Gastrocnemius medialis (tissue), 4 donors: ENCODE measurements at regions of chr1 and their contacts with region 1.

Region 1: DNA sequence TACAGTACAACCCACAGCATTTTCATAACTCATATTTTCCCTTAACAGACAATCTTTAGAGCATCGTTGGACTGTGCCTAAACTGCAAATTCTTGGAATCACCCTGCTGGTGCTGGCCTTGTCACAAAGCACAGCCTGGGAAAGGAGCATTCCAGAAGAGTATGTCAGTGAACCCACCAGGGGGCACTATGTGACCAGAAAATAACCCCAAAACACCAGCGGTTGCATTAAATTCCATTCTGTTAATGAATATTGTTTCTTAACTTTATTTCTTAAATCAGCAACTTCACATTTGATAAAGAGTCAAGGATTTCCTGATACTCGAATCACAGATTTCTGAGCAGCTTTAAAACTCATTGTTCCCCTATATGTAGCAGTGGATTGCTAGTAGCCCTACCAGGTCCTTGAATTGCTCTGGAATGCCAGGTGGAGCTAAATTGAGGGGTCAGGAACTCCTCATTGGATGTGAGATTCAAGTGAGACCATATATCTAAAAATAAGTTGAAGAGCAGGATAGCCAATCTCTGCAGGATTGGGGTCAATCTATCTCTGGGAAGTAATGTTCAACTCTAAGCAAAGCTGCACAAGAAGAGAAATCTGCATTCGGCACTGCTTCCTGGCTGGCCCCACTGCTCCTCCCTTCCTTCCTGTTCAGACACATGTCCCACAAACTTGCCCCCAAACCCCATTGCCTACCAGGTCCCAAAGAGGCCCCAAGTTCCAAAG is 12.7 kb upstream of the RAB4A start:
- DNase-seq: peak; percentile 29 to 33
- ATAC-seq: peak; percentile 82 to 84
- H3K4me3 ChIP-seq: no peak overlapping the region
- H3K27ac ChIP-seq: no peak overlapping the region
- H3K4me1 ChIP-seq: peaks cover 5 to 8% of the 10 kb centered on the region in 2 donors
- H3K27me3 ChIP-seq: no peaks in the 10 kb centered on the region
- CTCF ChIP-seq: peak; percentile 79 to 84 (median 83)
- POLR2A ChIP-seq: no peak

Region 2: DNA sequence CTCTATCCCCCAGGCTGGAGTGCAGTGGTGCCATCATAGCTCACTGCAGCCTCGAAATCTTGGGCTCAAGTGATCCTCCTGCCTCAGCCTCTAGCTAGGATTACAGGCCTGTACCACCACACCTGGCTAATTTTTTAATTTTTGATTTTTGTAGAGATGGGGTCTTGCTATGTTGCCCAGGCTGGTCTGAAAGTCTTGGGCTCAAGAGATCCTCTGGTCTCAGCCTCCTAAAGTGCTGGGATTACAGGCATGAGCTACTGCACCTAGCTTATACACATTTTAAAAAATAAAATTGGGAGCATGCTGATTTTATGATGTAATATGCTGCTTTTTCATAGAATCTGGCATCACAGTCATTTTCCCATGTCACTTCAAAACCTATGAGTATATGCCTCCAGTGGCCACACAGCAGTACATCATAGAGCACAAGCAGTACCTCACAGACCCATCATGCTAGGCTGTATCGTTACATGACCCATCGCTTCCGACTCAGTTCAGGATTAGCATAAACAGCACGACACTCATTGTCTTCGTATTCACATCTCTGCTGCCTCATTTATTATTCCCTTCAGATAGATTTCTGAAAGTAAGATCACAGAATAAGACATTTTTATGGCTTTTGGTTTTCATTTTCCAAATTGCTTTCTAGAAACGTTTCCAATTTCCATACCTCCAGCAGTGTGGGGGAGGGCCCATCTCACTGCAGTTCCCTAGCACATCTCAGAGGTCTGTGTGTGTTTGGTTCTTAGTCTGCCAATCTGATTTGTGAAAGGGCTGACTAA is 120.6 kb after region 1 on chr1:
- in situ Hi-C with region 1: no loop called
- intact Hi-C with region 1: no loop called
- DNase-seq: no peak
- ATAC-seq: no peak
- H3K4me3 ChIP-seq: no peak overlapping the region
- H3K27ac ChIP-seq: no peak overlapping the region
- H3K4me1 ChIP-seq: peaks cover 7 to 8% of the 10 kb centered on the region in 2 donors
- H3K27me3 ChIP-seq: no peaks in the 10 kb centered on the region
- CTCF ChIP-seq: no peak
- POLR2A ChIP-seq: no peak

Region 3: GRCh38 chr1:229479660-229480399 is 221.6 kb after region 1 on chr1:
- in situ Hi-C with region 1: loop called (anchors 5 kb)
- intact Hi-C with region 1: loop called (anchors 1 kb)
- DNase-seq: no peak
- ATAC-seq: no peak
- H3K4me3 ChIP-seq: no peak overlapping the region
- H3K27ac ChIP-seq: no peak overlapping the region
- H3K4me1 ChIP-seq: no peaks in the 10 kb centered on the region
- H3K27me3 ChIP-seq: no peaks in the 10 kb centered on the region
- CTCF ChIP-seq: no peak
- POLR2A ChIP-seq: no peak

Region 4: GRCh38 chr1:229514578-229515275 is 256.5 kb after region 1 on chr1:
- in situ Hi-C with region 1: loop called in 1 of 4 experiments (anchors 10 kb)
- intact Hi-C with region 1: loop called (anchors 1 kb)
- DNase-seq: peak; percentile 37 to 55
- ATAC-seq: peak; percentile 77 to 96
- H3K4me3 ChIP-seq: no peak overlapping the region
- H3K27ac ChIP-seq: no peak overlapping the region
- H3K4me1 ChIP-seq: no peaks in the 10 kb centered on the region
- H3K27me3 ChIP-seq: no peaks in the 10 kb centered on the region
- CTCF ChIP-seq: peak; percentile 43 to 81 (median 68)
- POLR2A ChIP-seq: no peak